Caco-2 (cell line): ENCODE measurements at regions of chr4 and their contacts with region 1.

Region 1: GRCh38 chr4:100093091-100093866 is 97.0 kb downstream of the DDIT4L start:
- DNase-seq: peak; percentile 60 to 76
- H3K4me3 ChIP-seq: no peak overlapping the region
- H3K4me3 Mint-ChIP-seq: no peak overlapping the region
- H3K27ac Mint-ChIP-seq: no peak overlapping the region
- H3K4me1 ChIP-seq: no peaks in the 10 kb centered on the region
- H3K4me1 Mint-ChIP-seq: no peaks in the 10 kb centered on the region
- H3K27me3 ChIP-seq: no peaks in the 10 kb centered on the region
- H3K27me3 Mint-ChIP-seq: no peaks in the 10 kb centered on the region
- CTCF ChIP-seq: peak; percentile 71 to 77

Region 2: DNA sequence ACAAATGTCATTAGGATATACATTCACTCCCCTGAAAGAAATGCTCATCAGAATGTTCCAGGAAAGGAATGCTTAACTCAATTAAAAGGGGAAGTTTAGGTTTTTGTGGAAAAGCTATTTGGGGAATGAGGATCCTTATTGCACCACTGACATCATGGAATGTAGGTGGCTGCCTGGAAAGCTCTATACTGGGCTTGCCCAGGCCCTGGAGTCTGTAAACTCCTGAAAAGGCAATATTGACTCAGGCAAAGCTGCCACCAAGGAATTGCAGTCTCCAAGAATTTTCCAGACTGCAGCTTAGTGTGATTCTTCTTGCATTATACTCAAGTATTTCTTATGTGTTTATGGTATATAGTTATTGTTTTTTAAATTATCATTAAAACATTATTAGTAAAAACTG is 260.9 kb before region 1 on chr4:
- CTCF ChIA-PET with region 1: no interaction called
- POLR2A ChIA-PET with region 1: no interaction called
- intact Hi-C with region 1: no loop called
- DNase-seq: no peak
- H3K4me3 ChIP-seq: no peak overlapping the region
- H3K4me3 Mint-ChIP-seq: no peak overlapping the region
- H3K27ac Mint-ChIP-seq: no peak overlapping the region
- H3K4me1 ChIP-seq: peaks cover 3% of the 10 kb centered on the region; the same call in 1 of the 2 replicates
- H3K4me1 Mint-ChIP-seq: no peaks in the 10 kb centered on the region
- H3K27me3 ChIP-seq: no peaks in the 10 kb centered on the region
- H3K27me3 Mint-ChIP-seq: peaks cover 2% of the 10 kb centered on the region
- CTCF ChIP-seq: no peak

Region 3: GRCh38 chr4:99998062-99998867 is 95.0 kb before region 1 on chr4:
- CTCF ChIA-PET with region 1: interaction called, 12 read pairs
- POLR2A ChIA-PET with region 1: no interaction called
- intact Hi-C with region 1: loop called (anchors 5 kb)
- DNase-seq: peak in 1 of 2 experiments; percentile 5
- H3K4me3 ChIP-seq: no peak overlapping the region
- H3K4me3 Mint-ChIP-seq: no peak overlapping the region
- H3K27ac Mint-ChIP-seq: no peak overlapping the region
- H3K4me1 ChIP-seq: no peaks in the 10 kb centered on the region
- H3K4me1 Mint-ChIP-seq: no peaks in the 10 kb centered on the region
- H3K27me3 ChIP-seq: no peaks in the 10 kb centered on the region
- H3K27me3 Mint-ChIP-seq: peaks cover 3% of the 10 kb centered on the region
- CTCF ChIP-seq: no peak

Region 4: DNA sequence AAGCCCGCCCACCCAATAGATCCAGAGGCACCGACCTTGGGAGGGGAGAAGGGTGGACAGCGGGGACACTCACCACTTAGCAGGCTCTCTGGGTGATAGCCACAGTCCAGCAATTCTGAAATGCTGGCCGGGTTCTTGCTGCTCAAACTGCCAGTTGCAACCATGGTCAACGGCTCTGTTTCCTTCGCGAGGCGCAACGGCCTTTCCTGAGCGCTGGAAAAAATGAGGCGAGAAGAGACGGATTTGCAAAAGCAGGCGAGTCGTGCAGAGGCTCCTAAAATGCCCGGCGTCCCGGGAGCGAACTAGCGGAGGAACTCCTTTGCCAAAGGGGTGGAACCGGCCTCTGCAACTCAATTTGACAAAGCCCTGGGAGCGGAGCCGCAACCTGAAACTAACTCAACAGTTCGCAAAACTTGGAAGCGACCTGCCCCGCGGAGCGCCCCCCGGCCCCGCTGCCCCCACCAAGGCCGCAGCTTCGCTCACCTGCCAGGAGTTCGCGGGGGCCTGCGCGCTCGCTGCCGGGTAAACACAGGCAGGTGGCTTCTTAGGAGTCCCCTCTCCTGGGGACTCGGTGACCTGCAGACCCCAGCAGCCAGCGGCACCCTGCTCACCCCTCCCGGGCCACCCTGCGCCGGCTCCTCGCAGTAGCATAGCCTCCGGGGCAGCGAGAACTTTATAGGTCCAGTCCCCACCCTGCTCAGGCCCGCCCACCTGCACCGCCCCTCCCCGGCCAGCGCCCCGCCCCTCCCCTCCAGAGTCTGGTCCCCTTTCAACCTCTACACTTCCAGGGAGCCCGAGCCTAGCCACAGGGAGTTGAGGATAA is 96.8 kb after region 1 on chr4 and contains the start of gene DDIT4L:
- CTCF ChIA-PET with region 1: no interaction called
- POLR2A ChIA-PET with region 1: no interaction called
- intact Hi-C with region 1: loop called (anchors 5 kb)
- DNase-seq: peak; percentile 58 to 59
- H3K4me3 ChIP-seq: peak within 1 kb of the TSS; percentile 45
- H3K4me3 Mint-ChIP-seq: peak within 1 kb of the TSS; percentile 83
- H3K27ac Mint-ChIP-seq: no peak within 1 kb of the TSS
- H3K4me1 ChIP-seq: no peaks in the 10 kb centered on the region
- H3K4me1 Mint-ChIP-seq: peaks cover 6% of the 10 kb centered on the region
- H3K27me3 ChIP-seq: no peaks in the 10 kb centered on the region
- H3K27me3 Mint-ChIP-seq: peaks cover 3% of the 10 kb centered on the region
- CTCF ChIP-seq: no peak
- total RNA-seq, gene DDIT4L: 4.0 and 4.7 TPM in 2 replicates

Region 5: DNA sequence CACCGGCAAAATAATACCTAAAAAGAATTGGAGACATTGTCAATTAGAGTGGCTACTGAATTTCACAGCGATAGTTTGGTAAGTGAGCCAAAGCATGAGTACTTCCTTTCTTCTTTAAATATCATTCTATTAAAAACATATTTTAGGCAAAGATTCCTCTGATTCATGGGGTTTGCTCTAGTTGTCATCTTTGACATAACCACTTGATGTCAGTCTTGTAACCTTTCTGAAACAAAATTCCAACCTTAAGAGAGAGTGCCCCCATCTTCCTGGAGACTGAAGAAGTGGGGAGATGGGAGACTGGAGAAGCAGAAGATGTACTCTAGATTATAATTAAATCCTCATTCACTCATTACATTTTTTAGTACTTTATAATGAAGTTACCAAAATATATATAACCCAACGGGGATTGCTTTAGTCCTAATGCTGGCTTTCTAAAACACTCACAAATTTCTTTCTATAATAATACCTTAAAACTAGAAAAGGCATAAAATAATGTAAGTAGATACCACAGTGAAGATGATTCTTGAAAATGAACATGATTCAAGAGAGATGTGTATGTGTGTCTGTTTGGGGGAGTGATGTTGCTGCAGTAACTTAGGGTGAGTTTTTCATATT is 328.2 kb after region 1 on chr4:
- CTCF ChIA-PET with region 1: no interaction called
- POLR2A ChIA-PET with region 1: no interaction called
- intact Hi-C with region 1: loop called (anchors 1 kb)
- DNase-seq: no peak
- H3K4me3 ChIP-seq: no peak overlapping the region
- H3K4me3 Mint-ChIP-seq: no peak overlapping the region
- H3K27ac Mint-ChIP-seq: no peak overlapping the region
- H3K4me1 ChIP-seq: no peaks in the 10 kb centered on the region
- H3K4me1 Mint-ChIP-seq: no peaks in the 10 kb centered on the region
- H3K27me3 ChIP-seq: no peaks in the 10 kb centered on the region
- H3K27me3 Mint-ChIP-seq: peaks cover 2% of the 10 kb centered on the region
- CTCF ChIP-seq: peak; percentile 29 to 49

Region 6: GRCh38 chr4:100696531-100696930 is 603.3 kb after region 1 on chr4:
- CTCF ChIA-PET with region 1: no interaction called
- POLR2A ChIA-PET with region 1: no interaction called
- intact Hi-C with region 1: no loop called
- DNase-seq: no peak
- H3K4me3 ChIP-seq: no peak overlapping the region
- H3K4me3 Mint-ChIP-seq: no peak overlapping the region
- H3K27ac Mint-ChIP-seq: no peak overlapping the region
- H3K4me1 ChIP-seq: peaks cover 15% of the 10 kb centered on the region
- H3K4me1 Mint-ChIP-seq: peaks cover 5% of the 10 kb centered on the region
- H3K27me3 ChIP-seq: no peaks in the 10 kb centered on the region
- H3K27me3 Mint-ChIP-seq: no peaks in the 10 kb centered on the region
- CTCF ChIP-seq: no peak

Region 7: GRCh38 chr4:102022343-102022742 is 1929.1 kb after region 1 on chr4:
- CTCF ChIA-PET with region 1: interaction called, 11 read pairs
- POLR2A ChIA-PET with region 1: no interaction called
- intact Hi-C with region 1: no loop called
- DNase-seq: no peak
- H3K4me3 ChIP-seq: no peak overlapping the region
- H3K4me3 Mint-ChIP-seq: no peak overlapping the region
- H3K27ac Mint-ChIP-seq: no peak overlapping the region
- H3K4me1 ChIP-seq: no peaks in the 10 kb centered on the region
- H3K4me1 Mint-ChIP-seq: no peaks in the 10 kb centered on the region
- H3K27me3 ChIP-seq: no peaks in the 10 kb centered on the region
- H3K27me3 Mint-ChIP-seq: no peaks in the 10 kb centered on the region
- CTCF ChIP-seq: no peak